ENCODE measurements at regions of chr19 and their contacts with region 1.

Region 1: DNA sequence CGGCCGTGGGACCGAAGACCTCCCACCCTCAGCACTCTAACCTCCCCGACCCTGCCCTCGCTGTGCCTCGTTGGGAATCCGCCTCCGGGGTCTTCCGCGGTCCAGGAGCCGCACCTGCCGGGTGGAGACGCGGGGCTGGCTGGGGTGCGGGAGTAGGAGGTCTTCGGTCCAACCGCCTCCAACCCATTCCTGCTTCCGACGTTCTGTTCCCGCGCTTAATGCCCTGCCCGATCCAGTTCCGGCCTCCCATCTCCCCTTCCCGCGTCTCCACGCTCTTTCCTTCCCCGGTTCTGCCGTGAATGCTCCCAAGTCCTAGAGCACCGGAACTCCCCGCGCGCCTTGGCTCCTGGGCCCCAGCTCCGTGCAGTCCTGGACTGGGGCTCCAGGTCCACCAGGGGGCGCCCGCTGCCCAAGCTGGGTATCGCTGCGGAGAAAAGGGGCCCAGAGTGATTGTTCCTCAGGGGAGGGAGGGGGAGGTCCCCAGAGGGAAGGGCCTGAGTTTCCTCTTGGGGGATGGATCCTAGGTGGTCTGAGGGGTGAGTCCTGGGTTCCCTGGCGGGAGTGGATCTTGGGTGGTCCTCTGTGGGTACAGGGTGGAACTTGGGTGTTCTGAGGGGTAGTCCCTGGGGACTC is 14.1 kb upstream of the TNFSF9 start:
- DNase-seq: peak; percentile 92
- H3K4me3 ChIP-seq: peak overlapping the region; percentile 57 to 66
- H3K27ac ChIP-seq: peak overlapping the region in 1 of 2 experiments; percentile 41; a peak in 2 of 4 replicates
- H3K4me1 ChIP-seq: peaks cover 6 to 8% of the 10 kb centered on the region in 2 experiments; a peak in 1 of 4 replicates
- H3K27me3 ChIP-seq: no peaks in the 10 kb centered on the region
- CTCF ChIP-seq: peak; percentile 97
- EP300 ChIP-seq: no peak
- RAD21 ChIP-seq: peak; percentile 82

Region 2: DNA sequence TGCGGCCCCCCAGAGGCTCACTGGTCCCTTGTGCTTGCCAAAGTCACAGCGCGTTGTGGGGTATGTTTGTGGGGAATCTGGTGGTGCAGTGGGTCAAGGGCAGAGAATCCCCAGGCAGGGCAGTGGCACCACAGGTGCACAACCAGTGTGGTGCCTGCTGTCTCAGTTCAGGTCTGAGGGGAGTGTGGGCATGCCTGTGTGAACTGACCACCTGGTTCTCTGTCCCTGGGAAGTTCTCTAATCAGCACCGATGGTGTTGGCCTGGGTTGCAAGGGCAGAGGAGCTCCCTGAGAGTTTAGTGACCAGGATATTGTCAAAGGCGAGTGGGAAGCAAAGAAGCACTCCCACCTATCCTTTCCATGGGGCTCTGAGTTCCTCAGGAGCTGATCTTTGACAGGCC is 343.6 kb before region 1 on chr19:
- CTCF ChIA-PET with region 1: no interaction called
- POLR2A ChIA-PET with region 1: no interaction called
- DNase-seq: no peak
- H3K4me3 ChIP-seq: no peak overlapping the region
- H3K27ac ChIP-seq: no peak overlapping the region
- H3K4me1 ChIP-seq: no peaks in the 10 kb centered on the region
- H3K27me3 ChIP-seq: peaks cover 10% of the 10 kb centered on the region; the same call in 1 of the 2 replicates
- CTCF ChIP-seq: no peak
- EP300 ChIP-seq: no peak
- RAD21 ChIP-seq: no peak

Region 3: GRCh38 chr19:6471076-6471475 is 45.7 kb before region 1 on chr19:
- CTCF ChIA-PET with region 1: no interaction called
- POLR2A ChIA-PET with region 1: no interaction called
- DNase-seq: no peak
- H3K4me3 ChIP-seq: no peak overlapping the region
- H3K27ac ChIP-seq: no peak overlapping the region
- H3K4me1 ChIP-seq: peaks cover 0 to 9% of the 10 kb centered on the region in 2 experiments; a peak in 1 of 4 replicates
- H3K27me3 ChIP-seq: peaks cover 50% of the 10 kb centered on the region
- CTCF ChIP-seq: no peak
- EP300 ChIP-seq: no peak
- RAD21 ChIP-seq: no peak

Region 4: DNA sequence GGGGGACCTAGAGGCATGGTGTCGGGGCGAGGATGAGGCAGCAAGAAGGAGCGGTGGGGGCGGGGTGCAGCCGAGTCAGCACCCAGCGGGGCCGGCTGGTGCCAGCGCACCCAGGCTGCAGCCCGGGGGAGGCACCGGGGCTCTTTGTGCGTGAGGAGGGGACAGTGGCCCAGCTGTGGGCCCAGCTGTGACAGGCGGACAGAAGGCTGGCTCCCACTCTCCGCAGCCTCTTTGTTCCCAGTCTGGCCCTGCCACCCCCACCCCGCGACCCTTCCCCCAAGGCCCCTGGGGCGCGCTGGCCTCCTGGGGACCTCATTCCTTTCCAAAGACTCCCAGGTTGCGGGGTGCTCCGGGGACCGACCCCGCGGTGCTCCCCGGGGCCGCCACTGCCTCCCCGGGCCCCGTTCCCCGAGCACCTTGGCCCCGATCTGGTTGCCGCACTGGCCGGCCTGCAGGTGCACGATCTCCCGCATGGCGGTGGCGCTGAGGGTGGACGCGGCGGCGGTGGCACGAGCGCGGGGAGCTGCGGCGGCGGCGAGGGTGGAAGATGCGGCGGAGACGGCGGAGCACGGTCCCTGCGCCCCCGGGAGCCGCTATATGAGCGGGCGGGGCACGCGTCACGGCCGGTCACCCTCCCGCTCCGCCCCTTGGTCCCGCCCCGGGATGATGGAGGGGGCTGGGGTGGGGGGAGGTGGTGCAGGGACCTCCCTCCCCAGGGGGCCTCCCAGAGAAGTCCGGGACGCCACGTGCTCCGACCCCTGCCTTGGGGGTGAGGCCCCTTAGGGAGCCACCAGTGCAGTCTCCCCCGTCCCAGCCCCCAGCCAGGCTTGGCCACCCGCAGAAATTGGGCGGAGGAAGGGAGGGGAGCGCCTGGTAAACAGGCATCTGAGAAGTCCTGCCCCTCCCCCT is 14.8 kb before region 1 on chr19 and contains the start of gene TUBB4A:
- CTCF ChIA-PET with region 1: interaction called, 20 read pairs
- POLR2A ChIA-PET with region 1: no interaction called
- DNase-seq: peak; percentile 95
- H3K4me3 ChIP-seq: peak within 1 kb of the TSS; percentile 46 to 56; a peak in 3 of 4 replicates
- H3K27ac ChIP-seq: peak within 1 kb of the TSS in 1 of 2 experiments; percentile 51; a peak in 1 of 4 replicates
- H3K4me1 ChIP-seq: peaks cover 0 to 8% of the 10 kb centered on the region in 2 experiments; a peak in 1 of 4 replicates
- H3K27me3 ChIP-seq: peaks cover 7% of the 10 kb centered on the region
- CTCF ChIP-seq: no peak
- EP300 ChIP-seq: no peak
- RAD21 ChIP-seq: no peak
- polyA plus RNA-seq, gene TUBB4A: 2.3 and 4.5 TPM in 2 replicates

Region 5: DNA sequence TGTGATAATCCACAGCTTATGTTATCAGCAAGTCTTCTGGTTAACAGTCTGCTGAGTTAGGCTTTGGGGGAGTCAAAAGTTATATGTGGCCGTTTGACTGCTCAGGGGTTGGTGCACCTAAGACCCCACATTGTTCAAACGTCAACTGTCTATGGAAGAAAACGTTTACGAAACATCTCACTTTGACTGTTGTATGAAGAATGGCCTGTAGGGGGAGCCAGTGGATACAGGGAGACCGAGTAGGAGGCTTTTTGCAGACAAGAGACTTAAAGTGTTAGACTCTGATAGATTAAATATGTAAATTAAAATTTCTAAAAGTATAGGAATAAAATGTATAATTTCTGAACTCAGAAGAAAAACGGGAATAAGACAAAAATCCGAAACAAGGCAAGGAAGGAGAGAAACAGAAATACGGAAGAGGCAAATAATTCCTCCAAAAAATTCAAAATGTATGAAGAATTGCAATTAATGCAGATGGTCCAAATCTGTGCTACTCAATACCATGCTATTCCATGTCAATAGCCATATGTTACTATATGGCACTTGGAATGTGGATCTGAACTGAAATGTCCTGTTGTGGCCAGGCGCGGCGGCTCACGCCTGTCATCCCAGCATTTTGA is 115.3 kb after region 1 on chr19:
- CTCF ChIA-PET with region 1: interaction called, 19 read pairs
- POLR2A ChIA-PET with region 1: no interaction called
- DNase-seq: peak; percentile 58
- H3K4me3 ChIP-seq: peak overlapping the region in 1 of 2 experiments; percentile 4; a peak in 1 of 4 replicates
- H3K27ac ChIP-seq: no peak overlapping the region
- H3K4me1 ChIP-seq: no peaks in the 10 kb centered on the region
- H3K27me3 ChIP-seq: peaks cover 12% of the 10 kb centered on the region; the same call in 1 of the 2 replicates
- CTCF ChIP-seq: peak; percentile 87
- EP300 ChIP-seq: no peak
- RAD21 ChIP-seq: peak; percentile 66

Region 6: GRCh38 chr19:6737284-6738046 is 220.7 kb after region 1 on chr19 and contains the start of gene GPR108:
- CTCF ChIA-PET with region 1: interaction called, 10 read pairs
- POLR2A ChIA-PET with region 1: no interaction called
- DNase-seq: peak; percentile 96
- H3K4me3 ChIP-seq: peak within 1 kb of the TSS; percentile 90 to 91
- H3K27ac ChIP-seq: peak within 1 kb of the TSS; percentile 90 to 96
- H3K4me1 ChIP-seq: peaks cover 22 to 23% of the 10 kb centered on the region in 2 experiments; a peak in 3 of 4 replicates
- H3K27me3 ChIP-seq: no peaks in the 10 kb centered on the region
- CTCF ChIP-seq: no peak
- EP300 ChIP-seq: peak in 1 of 2 experiments; percentile 72; a peak in 2 of 4 replicates
- RAD21 ChIP-seq: no peak
- polyA plus RNA-seq, gene GPR108: 51.4 and 54.2 TPM in 2 replicates

Region 7: GRCh38 chr19:6862673-6863078 is 345.9 kb after region 1 on chr19:
- CTCF ChIA-PET with region 1: interaction called, 19 read pairs
- POLR2A ChIA-PET with region 1: no interaction called
- DNase-seq: peak; percentile 65
- H3K4me3 ChIP-seq: peak overlapping the region in 1 of 2 experiments; percentile 29; a peak in 1 of 4 replicates
- H3K27ac ChIP-seq: no peak overlapping the region
- H3K4me1 ChIP-seq: no peaks in the 10 kb centered on the region
- H3K27me3 ChIP-seq: peaks cover 47% of the 10 kb centered on the region; the same call in 1 of the 2 replicates
- CTCF ChIP-seq: peak; percentile 75
- EP300 ChIP-seq: no peak
- RAD21 ChIP-seq: peak; percentile 73